Activated CD8-positive, alpha-beta memory T cell treated with anti-CD3 and anti-CD28 coated beads, Interleukin-2, amount 10 ng/mL, durations not matched to agents 7 days and 5 days (primary cell): ENCODE measurements at regions of chr10 and their contacts with region 1.

Region 1: DNA sequence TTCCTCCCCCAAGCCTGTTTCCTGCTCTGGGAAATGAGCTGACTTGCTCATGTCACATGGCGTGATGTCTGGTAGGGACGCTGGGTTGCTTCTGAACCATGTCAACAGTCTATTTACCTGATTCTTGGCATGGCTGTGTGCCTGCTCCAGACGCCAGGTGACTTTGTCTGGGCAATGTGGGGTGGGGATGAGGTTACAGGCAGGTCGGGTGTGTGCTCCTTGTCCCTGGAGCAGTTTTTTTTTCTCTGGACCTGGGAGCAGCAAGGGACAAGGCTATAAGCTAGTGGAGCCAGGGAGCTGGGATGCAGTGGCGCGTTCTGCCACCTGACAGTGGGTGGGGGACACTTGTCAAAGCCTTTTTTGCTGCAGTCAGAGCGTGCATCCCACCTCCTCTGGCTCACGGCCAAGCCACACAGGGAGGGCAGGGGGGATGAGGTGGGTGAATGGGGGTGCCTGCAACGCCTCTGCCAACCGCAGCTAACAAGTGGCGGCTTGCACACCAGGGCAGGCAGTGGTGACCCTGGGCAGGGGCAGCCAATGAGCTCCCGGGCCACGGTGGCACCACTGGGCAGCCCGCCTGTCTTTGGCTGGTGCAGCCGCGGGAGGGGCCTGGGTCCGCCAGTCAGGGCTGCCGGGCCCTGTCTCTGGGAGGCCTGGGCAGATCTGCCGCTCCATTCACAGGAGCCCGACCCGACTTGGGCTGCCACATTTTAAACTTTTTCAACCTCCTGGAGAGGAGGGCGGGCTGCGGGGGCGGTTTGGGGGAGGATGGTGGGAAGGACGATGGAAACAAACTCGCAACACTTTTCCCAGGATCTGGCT is 22.9 kb downstream of the DNAJB12 start:
- DNase-seq: peak; percentile 96
- ATAC-seq: peak; percentile 67
- H3K4me3 Mint-ChIP-seq: peak overlapping the region; percentile 54
- H3K27ac Mint-ChIP-seq: peak overlapping the region; percentile 92
- H3K4me1 Mint-ChIP-seq: peaks cover 90% of the 10 kb centered on the region
- H3K27me3 Mint-ChIP-seq: no peaks in the 10 kb centered on the region

Region 2: GRCh38 chr10:72133517-72133916 is 198.3 kb before region 1 on chr10:
- CTCF ChIA-PET with region 1: interaction called, 59 read pairs
- DNase-seq: no peak
- ATAC-seq: peak; percentile 30
- H3K4me3 Mint-ChIP-seq: no peak overlapping the region
- H3K27ac Mint-ChIP-seq: peak overlapping the region; percentile 40
- H3K4me1 Mint-ChIP-seq: peaks cover 37% of the 10 kb centered on the region
- H3K27me3 Mint-ChIP-seq: no peaks in the 10 kb centered on the region

Region 3: GRCh38 chr10:72248468-72249151 is 83.2 kb before region 1 on chr10:
- CTCF ChIA-PET with region 1: interaction called, 94 read pairs
- DNase-seq: peak; percentile 93
- ATAC-seq: peak; percentile 91
- H3K4me3 Mint-ChIP-seq: peak overlapping the region; percentile 69
- H3K27ac Mint-ChIP-seq: peak overlapping the region; percentile 92
- H3K4me1 Mint-ChIP-seq: peaks cover 76% of the 10 kb centered on the region
- H3K27me3 Mint-ChIP-seq: no peaks in the 10 kb centered on the region

Region 4: DNA sequence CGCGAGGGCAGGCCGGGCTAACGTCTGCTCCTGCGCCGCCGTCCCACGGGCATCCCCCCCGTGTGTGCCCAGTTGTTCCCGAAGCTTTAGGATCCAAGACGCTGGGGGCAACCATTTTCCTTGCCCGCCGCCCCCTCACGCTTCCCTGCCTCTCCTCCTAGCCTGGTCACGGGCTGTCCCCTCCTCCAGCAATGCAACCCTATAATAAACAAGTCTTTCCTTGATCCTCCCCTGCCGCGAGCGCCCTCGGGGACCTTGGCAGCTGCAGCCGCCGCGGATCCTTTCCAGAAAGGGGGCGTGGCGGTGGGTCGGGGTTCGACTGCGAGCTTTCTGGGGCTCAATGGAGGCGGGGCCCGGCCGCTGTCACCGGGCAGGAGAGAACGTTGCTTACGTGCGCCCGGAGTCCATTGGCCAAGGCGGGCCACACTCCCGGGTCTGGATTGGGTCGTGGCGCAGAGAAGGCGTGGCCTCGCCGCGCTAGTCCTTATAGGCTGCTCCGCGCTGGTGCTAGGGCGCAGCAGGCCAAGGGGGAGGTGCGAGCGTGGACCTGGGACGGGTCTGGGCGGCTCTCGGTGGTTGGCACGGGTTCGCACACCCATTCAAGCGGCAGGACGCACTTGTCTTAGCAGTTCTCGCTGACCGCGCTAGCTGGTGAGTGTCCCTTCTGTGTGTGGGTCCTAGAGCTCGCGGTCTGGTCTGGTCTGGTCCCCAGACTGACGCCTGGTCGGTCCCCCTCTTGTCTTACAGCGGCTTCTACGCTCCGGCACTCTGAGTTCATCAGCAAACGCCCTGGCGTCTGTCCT is 58.2 kb before region 1 on chr10 and contains the start of gene DDIT4:
- CTCF ChIA-PET with region 1: interaction called, 141 read pairs
- DNase-seq: peak; percentile 100
- ATAC-seq: peak; percentile 94
- H3K4me3 Mint-ChIP-seq: peak within 1 kb of the TSS; percentile 98
- H3K27ac Mint-ChIP-seq: peak within 1 kb of the TSS; percentile 98
- H3K4me1 Mint-ChIP-seq: peaks cover 50% of the 10 kb centered on the region
- H3K27me3 Mint-ChIP-seq: no peaks in the 10 kb centered on the region
- total RNA-seq, gene DDIT4: 291 to 293 TPM

Region 5: GRCh38 chr10:72297968-72298773 is 33.6 kb before region 1 on chr10:
- CTCF ChIA-PET with region 1: interaction called, 38 read pairs
- DNase-seq: peak; percentile 98
- ATAC-seq: peak; percentile 81
- H3K4me3 Mint-ChIP-seq: peak overlapping the region; percentile 77
- H3K27ac Mint-ChIP-seq: peak overlapping the region; percentile 99
- H3K4me1 Mint-ChIP-seq: peaks cover 59% of the 10 kb centered on the region
- H3K27me3 Mint-ChIP-seq: no peaks in the 10 kb centered on the region

Region 6: DNA sequence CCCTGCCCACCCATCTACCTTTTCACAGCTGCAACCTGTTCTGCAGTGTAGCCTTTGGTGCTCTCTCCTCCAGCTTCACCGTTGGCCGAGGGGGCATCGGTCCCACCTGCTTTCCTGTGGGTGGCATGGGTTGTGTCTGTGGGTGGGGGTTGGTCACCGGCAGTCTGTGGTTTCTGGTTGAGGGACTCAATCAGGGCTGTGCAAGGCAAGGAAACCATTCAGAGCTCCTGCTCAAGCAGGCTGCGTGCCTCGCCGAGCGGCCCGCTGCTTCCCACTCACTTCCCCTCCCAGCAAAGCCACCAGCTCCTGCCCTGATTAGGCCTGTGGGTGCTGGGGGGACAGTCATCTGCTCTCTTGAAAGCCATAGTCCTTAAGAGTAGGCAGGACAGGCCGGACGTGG is 13.1 kb after region 1 on chr10:
- CTCF ChIA-PET with region 1: interaction called, 64 read pairs
- DNase-seq: peak; percentile 58
- ATAC-seq: peak; percentile 46
- H3K4me3 Mint-ChIP-seq: no peak overlapping the region
- H3K27ac Mint-ChIP-seq: peak overlapping the region; percentile 59
- H3K4me1 Mint-ChIP-seq: peaks cover 28% of the 10 kb centered on the region
- H3K27me3 Mint-ChIP-seq: no peaks in the 10 kb centered on the region